ENCODE measurements at regions of chr18 and their contacts with region 1.

Region 1: GRCh38 chr18:47821314-47821713 is 109.1 kb downstream of the SMAD2 start:
- DNase-seq: no peak
- H3K4me3 ChIP-seq: no peak overlapping the region
- CTCF ChIP-seq: no peak
- POLR2A ChIP-seq: no peak

Region 2: GRCh38 chr18:47618758-47619157 is 202.6 kb before region 1 on chr18:
- intact Hi-C with region 1: no loop called
- DNase-seq: no peak
- H3K4me3 ChIP-seq: no peak overlapping the region
- CTCF ChIP-seq: no peak
- POLR2A ChIP-seq: no peak

Region 3: GRCh38 chr18:47772374-47773248 is 48.7 kb before region 1 on chr18:
- intact Hi-C with region 1: no loop called
- DNase-seq: no peak
- H3K4me3 ChIP-seq: no peak overlapping the region
- CTCF ChIP-seq: peak in 1 of 3 donors; percentile 17
- POLR2A ChIP-seq: no peak

Region 4: DNA sequence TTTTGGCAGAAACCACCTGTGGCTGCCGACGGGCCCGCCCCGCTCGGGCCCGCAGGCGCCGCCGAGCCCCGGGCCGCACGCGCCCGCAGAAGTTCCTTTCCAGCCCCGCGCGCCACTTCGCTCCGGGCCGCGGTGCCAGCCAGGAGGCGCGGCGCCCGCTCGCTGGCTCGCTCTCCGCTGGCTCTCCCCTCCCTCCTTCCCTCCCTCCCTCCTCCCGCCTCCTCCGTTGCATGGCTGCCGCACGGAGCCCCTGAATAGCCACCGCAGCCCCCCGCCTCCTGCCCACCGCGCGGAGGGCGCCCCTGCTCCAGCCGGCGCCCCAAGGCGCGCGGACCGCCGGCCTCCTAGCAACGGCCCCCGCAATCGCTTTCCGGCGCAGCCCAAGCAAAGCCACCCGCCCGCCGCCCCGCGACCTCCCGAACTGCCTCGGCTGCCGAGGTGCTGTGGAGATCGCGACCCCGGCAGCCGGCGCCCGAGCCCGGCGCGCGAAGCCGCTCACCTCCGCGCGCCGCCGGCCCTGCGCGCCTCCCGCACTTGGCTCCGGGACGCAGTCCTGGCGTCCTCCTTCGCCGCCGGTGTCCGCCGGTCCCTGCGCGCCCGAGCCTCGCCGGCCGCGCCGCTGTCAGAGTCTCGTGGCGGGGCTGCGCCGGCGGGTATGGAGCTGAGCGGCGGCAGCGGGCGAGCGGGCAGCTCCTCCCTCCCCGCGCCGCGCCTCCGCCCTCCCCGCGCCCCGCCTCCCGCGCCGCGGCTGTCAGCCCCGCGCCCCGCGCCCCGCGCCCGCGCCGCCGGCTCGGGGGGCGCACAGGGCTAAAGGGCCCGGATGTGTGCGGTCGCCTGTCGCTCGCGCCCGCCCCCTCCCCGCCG is 587.6 kb after region 1 on chr18 and contains the start of gene ZBTB7C:
- intact Hi-C with region 1: no loop called
- DNase-seq: no peak
- H3K4me3 ChIP-seq: peak within 1 kb of the TSS; percentile 71
- CTCF ChIP-seq: no peak
- POLR2A ChIP-seq: no peak
- total RNA-seq, gene ZBTB7C: 44.2 to 59.7 (median 50.7) TPM

Region 5: DNA sequence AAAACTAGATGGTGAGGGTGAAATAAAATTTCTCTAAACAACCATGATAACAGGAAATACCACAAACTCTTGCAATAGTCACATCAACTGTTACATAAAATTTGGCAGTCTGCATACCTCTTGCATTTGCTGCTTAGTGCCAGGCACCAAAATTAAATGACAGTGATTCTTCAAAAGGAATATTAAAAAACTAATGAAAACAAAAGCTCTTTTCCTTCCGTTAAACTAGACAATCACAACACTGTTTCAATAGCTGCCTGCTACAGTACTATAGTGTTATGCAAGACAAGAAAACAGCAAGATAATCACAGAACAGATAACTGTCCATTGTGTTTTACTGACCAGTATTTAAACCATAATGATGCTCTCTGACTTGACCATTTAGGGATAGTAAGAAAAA is 1368.5 kb after region 1 on chr18:
- intact Hi-C with region 1: loop called (anchors 5 kb)
- DNase-seq: no peak
- H3K4me3 ChIP-seq: no peak overlapping the region
- CTCF ChIP-seq: no peak
- POLR2A ChIP-seq: no peak

Measured in lower leg skin (tissue), 4 donors.